ENCODE measurements at regions of chr12 and their contacts with region 1.

Region 1: GRCh38 chr12:29317556-29318363 is 63.2 kb downstream of the ERGIC2 start:
- DNase-seq: no peak
- ATAC-seq: peak; percentile 99
- H3K4me3 Mint-ChIP-seq: no peak overlapping the region
- H3K27ac Mint-ChIP-seq: no peak overlapping the region
- H3K4me1 Mint-ChIP-seq: peaks cover 9% of the 10 kb centered on the region
- H3K27me3 Mint-ChIP-seq: no peaks in the 10 kb centered on the region
- CTCF ChIP-seq: no peak

Region 2: GRCh38 chr12:29073628-29074239 is 244.0 kb before region 1 on chr12:
- CTCF ChIA-PET with region 1: interaction called, 8 read pairs
- POLR2A ChIA-PET with region 1: no interaction called
- intact Hi-C with region 1: loop called (anchors 1 kb)
- DNase-seq: no peak
- ATAC-seq: peak; percentile 14
- H3K4me3 Mint-ChIP-seq: no peak overlapping the region
- H3K27ac Mint-ChIP-seq: no peak overlapping the region
- H3K4me1 Mint-ChIP-seq: no peaks in the 10 kb centered on the region
- H3K27me3 Mint-ChIP-seq: peaks cover 8% of the 10 kb centered on the region
- CTCF ChIP-seq: no peak

Region 3: DNA sequence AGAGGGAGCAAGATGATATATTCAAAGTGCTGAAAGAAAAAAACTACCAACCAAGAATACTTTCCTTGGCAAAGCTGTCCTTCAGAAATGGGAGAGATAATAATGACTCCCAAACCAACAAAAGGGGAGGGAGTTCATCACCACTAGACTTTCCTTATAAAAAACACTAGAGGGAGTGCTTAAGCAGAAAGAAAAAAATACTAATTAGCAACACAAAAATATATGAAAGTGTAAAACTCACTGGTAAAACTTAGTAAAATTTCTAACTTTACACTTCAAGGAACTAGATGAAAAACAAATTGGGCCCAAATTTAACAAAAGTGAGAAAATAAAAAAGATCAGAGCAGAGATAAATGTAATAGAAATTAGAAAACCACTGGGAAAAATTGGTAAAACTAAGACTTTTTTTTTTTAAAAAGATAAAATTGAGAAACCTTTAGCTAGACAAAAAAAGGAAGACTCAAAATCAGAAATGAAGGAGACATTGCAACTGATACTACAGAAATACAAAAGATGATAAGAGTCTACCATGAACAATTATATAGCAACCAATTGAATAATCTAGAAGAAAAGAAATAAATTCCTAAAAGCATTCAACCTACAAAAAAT is 229.0 kb before region 1 on chr12:
- CTCF ChIA-PET with region 1: interaction called, 4 read pairs
- POLR2A ChIA-PET with region 1: no interaction called
- intact Hi-C with region 1: loop called (anchors 1 kb)
- DNase-seq: no peak
- ATAC-seq: no peak
- H3K4me3 Mint-ChIP-seq: no peak overlapping the region
- H3K27ac Mint-ChIP-seq: no peak overlapping the region
- H3K4me1 Mint-ChIP-seq: no peaks in the 10 kb centered on the region
- H3K27me3 Mint-ChIP-seq: peaks cover 4% of the 10 kb centered on the region
- CTCF ChIP-seq: no peak

Region 4: GRCh38 chr12:29286081-29286790 is 31.5 kb before region 1 on chr12:
- CTCF ChIA-PET with region 1: no interaction called
- POLR2A ChIA-PET with region 1: no interaction called
- intact Hi-C with region 1: no loop called
- DNase-seq: no peak
- ATAC-seq: no peak
- H3K4me3 Mint-ChIP-seq: no peak overlapping the region
- H3K27ac Mint-ChIP-seq: no peak overlapping the region
- H3K4me1 Mint-ChIP-seq: no peaks in the 10 kb centered on the region
- H3K27me3 Mint-ChIP-seq: no peaks in the 10 kb centered on the region
- CTCF ChIP-seq: no peak

Region 5: DNA sequence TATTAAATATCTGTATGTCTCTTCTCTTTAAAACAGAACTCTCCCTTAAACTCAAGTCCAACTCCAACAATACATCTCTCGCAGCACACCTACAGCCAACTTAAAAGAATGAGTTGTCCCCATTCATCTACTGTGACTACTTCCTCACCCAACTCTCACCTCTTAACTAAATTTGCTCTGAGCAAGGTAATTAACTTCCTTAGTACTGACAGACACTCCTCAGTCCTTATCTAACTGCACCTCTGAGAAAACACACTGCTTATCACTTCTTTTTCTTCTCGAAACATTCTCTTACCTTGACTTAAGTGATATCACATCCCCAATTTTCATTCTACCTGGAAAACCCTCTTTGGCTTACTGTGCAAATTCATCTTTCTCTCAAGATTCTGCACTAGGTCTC is 56.3 kb after region 1 on chr12:
- CTCF ChIA-PET with region 1: no interaction called
- POLR2A ChIA-PET with region 1: no interaction called
- intact Hi-C with region 1: no loop called
- DNase-seq: no peak
- ATAC-seq: no peak
- H3K4me3 Mint-ChIP-seq: no peak overlapping the region
- H3K27ac Mint-ChIP-seq: no peak overlapping the region
- H3K4me1 Mint-ChIP-seq: peaks cover 23% of the 10 kb centered on the region
- H3K27me3 Mint-ChIP-seq: no peaks in the 10 kb centered on the region
- CTCF ChIP-seq: no peak

Region 6: GRCh38 chr12:29519585-29520182 is 201.9 kb after region 1 on chr12:
- CTCF ChIA-PET with region 1: no interaction called
- POLR2A ChIA-PET with region 1: no interaction called
- intact Hi-C with region 1: no loop called
- DNase-seq: no peak
- ATAC-seq: no peak
- H3K4me3 Mint-ChIP-seq: no peak overlapping the region
- H3K27ac Mint-ChIP-seq: no peak overlapping the region
- H3K4me1 Mint-ChIP-seq: no peaks in the 10 kb centered on the region
- H3K27me3 Mint-ChIP-seq: peaks cover 11% of the 10 kb centered on the region
- CTCF ChIP-seq: peak; percentile 40

Region 7: GRCh38 chr12:29807125-29807524 is 489.4 kb after region 1 on chr12:
- CTCF ChIA-PET with region 1: no interaction called
- POLR2A ChIA-PET with region 1: no interaction called
- intact Hi-C with region 1: no loop called
- DNase-seq: no peak
- ATAC-seq: no peak
- H3K4me3 Mint-ChIP-seq: no peak overlapping the region
- H3K27ac Mint-ChIP-seq: no peak overlapping the region
- H3K4me1 Mint-ChIP-seq: no peaks in the 10 kb centered on the region
- H3K27me3 Mint-ChIP-seq: no peaks in the 10 kb centered on the region
- CTCF ChIP-seq: no peak